Activated CD4-positive, alpha-beta memory T cell treated with anti-CD3 and anti-CD28 coated beads for 36 hours (primary cell): ENCODE measurements at regions of chr17 and their contacts with region 1.

Region 1: GRCh38 chr17:76378548-76379274 is 5.7 kb upstream of the SPHK1 start:
- DNase-seq: no peak
- H3K4me3 Mint-ChIP-seq: no peak overlapping the region
- H3K27ac Mint-ChIP-seq: no peak overlapping the region
- H3K4me1 Mint-ChIP-seq: peaks cover 4% of the 10 kb centered on the region
- H3K27me3 Mint-ChIP-seq: no peaks in the 10 kb centered on the region

Region 2: DNA sequence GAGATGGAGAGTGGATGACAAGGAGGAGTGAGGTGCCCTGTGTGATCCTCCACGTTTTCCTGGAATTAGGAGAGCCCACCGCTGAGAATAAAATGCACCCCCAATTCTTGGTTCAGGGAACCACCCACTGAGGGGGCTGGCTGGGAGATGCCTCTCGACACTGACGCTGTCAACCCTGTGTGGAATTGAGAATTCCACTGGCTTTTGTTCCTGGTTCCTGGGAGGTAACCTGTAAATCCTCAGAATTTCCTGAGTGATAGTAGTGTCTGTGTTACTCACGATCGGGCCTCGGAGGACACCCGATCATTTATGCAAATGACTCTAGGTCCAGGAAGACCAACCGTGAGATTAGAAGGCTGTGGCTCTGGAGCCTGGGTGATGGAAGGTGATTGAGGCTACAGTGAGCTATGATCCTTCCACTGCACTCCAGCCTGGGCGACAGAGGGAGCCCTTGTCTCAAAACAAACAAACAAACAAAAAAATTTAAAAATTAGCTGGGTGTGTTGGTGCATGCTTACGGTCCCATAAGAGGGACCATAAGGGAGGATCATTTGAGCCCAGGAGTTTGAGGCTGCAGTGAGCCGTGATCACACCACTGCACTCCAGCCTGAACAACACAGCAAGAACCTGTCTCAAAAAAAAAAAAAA is 13.3 kb before region 1 on chr17:
- CTCF ChIA-PET with region 1: interaction called, 18 read pairs
- POLR2A ChIA-PET with region 1: no interaction called
- intact Hi-C with region 1: loop called (anchors 1 kb)
- DNase-seq: no peak
- H3K4me3 Mint-ChIP-seq: no peak overlapping the region
- H3K27ac Mint-ChIP-seq: no peak overlapping the region
- H3K4me1 Mint-ChIP-seq: no peaks in the 10 kb centered on the region
- H3K27me3 Mint-ChIP-seq: no peaks in the 10 kb centered on the region

Region 3: DNA sequence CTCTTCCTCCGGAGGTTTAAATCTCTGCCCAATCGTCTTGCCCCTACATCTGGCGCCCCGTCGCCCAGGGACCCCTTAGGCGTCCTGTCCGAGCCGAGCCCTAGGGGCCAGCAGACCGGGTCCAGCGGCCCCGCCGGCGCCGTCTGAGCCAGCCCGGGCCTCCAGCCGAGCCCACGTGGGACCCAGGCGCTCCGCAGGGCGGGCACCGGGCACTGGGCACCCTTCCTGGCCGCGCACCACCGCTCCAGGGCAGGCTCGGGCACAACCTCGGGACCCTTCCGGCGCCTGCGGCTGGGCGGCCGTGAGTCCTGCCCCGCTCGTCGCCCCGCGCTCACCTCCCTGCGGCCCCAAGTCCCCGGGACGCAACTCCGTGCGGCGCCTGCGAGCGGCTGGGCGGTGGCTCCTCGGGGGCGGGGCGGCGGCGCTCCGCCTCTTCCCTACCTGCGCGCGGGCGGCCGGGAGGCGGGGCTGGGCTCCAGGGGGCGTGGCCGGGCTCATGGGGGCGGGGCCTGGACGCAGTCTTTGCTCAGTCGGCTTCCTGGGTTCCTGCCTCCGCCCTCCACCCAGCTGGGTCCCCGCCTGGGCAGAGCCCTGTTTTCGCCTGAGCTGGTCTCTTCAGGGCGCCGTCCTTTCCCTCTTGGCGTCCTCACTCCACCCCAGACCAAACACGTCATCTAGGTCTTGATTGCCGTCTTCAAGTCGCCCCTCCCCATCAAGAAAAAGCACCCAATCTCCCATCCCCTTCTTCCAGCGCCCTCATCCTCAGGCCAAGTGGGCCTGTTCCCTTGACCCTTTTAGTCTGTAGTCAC is 122.5 kb after region 1 on chr17 and contains the start of gene RHBDF2:
- CTCF ChIA-PET with region 1: no interaction called
- POLR2A ChIA-PET with region 1: no interaction called
- intact Hi-C with region 1: no loop called
- DNase-seq: peak; percentile 98
- H3K4me3 Mint-ChIP-seq: peak within 1 kb of the TSS; percentile 86
- H3K27ac Mint-ChIP-seq: peak within 1 kb of the TSS; percentile 85
- H3K4me1 Mint-ChIP-seq: peaks cover 45% of the 10 kb centered on the region
- H3K27me3 Mint-ChIP-seq: no peaks in the 10 kb centered on the region
- total RNA-seq, gene RHBDF2: 28.9 to 30.0 TPM